ENCODE measurements at regions of chr6 and their contacts with region 1.

Region 1: DNA sequence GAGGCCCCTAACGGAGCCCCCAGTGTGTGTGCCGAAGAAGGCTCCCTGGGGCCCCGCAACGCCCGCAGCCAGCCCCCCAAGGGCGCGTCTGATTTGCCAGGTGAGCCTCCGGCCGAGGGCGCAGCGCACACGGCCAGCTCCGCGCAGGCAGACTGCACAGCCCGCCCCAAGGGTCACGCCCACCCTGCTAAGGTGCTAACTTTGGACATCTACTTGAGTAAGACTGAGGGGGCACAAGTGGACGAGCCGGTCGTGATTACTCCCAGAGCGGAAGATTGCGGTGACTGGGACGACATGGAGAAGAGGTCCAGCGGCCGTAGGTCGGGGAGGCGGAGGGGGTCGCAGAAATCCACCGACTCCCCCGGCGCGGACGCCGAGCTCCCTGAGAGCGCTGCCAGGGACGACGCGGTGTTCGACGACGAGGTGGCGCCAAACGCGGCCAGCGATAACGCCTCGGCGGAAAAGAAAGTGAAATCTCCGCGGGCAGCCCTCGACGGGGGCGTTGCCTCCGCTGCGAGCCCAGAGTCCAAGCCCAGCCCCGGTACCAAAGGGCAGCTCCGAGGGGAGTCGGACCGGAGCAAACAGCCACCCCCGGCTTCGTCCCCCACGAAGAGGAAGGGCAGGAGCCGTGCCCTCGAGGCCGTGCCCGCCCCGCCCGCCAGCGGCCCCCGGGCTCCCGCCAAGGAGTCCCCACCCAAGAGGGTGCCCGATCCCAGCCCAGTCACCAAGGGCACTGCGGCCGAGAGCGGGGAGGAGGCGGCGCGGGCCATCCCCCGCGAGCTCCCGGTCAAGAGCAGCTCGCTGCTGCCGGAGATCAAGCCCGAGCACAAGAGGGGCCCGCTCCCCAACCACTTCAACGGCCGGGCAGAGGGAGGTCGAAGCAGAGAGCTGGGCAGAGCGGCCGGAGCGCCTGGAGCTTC is 117.0 kb downstream of the RTN4IP1 start:
- DNase-seq: peak; percentile 80
- H3K4me3 Mint-ChIP-seq: peak overlapping the region; percentile 87
- H3K27ac Mint-ChIP-seq: peak overlapping the region; percentile 88
- H3K4me1 Mint-ChIP-seq: peaks cover 59% of the 10 kb centered on the region
- H3K27me3 Mint-ChIP-seq: peaks cover 12% of the 10 kb centered on the region

Region 2: GRCh38 chr6:105992315-105992961 is 519.9 kb before region 1 on chr6:
- intact Hi-C with region 1: loop called (anchors 5 kb)
- DNase-seq: peak; percentile 89
- H3K4me3 Mint-ChIP-seq: peak overlapping the region; percentile 94
- H3K27ac Mint-ChIP-seq: peak overlapping the region; percentile 81
- H3K4me1 Mint-ChIP-seq: peaks cover 57% of the 10 kb centered on the region
- H3K27me3 Mint-ChIP-seq: peaks cover 23% of the 10 kb centered on the region

Region 3: GRCh38 chr6:106444777-106445507 is 67.4 kb before region 1 on chr6:
- intact Hi-C with region 1: loop called (anchors 2 kb)
- DNase-seq: peak; percentile 18
- H3K4me3 Mint-ChIP-seq: no peak overlapping the region
- H3K27ac Mint-ChIP-seq: no peak overlapping the region
- H3K4me1 Mint-ChIP-seq: peaks cover 22% of the 10 kb centered on the region
- H3K27me3 Mint-ChIP-seq: peaks cover 37% of the 10 kb centered on the region

Region 4: DNA sequence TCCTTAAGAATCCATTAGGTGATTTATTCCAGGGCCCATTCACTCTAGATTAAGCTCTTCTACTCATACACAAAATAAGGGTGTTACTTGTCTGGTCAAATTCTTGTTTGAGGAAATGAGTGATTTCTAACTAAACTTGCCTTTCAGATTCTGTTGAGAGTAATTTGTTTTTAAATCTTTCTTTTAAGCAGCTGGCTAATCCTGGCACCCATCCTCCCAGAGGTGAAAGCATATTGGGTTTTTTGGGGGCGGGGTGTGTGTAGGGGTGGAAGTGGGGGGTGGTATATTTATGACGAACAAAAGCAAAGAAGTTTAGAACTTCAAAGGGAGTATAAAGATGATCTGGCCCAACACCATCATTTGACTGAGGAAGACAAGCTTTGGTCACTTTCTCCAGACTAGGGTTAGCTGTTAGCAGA is 22.3 kb after region 1 on chr6:
- intact Hi-C with region 1: loop called (anchors 1 kb)
- DNase-seq: no peak
- H3K4me3 Mint-ChIP-seq: peak overlapping the region; percentile 9
- H3K27ac Mint-ChIP-seq: peak overlapping the region; percentile 82
- H3K4me1 Mint-ChIP-seq: peaks cover 70% of the 10 kb centered on the region
- H3K27me3 Mint-ChIP-seq: no peaks in the 10 kb centered on the region

Region 5: DNA sequence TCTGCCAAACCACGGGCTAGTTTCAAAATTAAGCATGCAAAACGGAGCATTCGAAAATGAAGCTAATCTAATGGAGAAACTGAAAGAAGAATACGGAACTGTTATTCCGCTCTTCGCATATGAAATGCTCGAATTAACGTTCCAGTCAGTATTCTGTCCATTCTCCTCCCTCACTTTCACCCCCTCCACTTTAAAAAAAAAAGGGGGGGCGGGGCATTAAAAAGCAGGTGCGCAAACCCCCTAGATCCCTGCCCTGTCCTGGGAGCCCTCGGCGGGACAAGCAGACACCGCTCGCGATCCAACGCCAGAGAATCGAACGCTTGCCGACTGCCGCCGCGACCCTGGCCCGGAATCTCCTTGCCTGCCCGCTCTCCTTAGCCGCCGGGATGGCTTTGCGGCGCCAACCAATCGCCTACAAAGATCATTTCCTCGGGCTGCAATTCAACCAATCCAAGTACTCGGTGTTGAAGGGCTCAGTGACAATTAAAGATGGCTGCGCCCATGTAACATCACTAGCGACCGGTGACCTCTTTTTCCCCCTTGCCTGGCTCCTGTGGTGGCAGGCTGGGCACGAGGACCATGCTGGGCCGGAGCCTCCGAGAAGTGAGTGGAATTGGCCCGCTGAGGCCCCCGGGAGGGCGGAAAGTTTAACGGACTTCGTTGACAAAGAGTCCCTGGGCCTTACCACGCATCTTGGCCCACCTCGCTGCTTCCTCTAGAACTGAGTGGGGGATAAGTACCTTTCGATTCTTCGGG is 117.0 kb after region 1 on chr6 and contains the starts of genes QRSL1 and RTN4IP1:
- intact Hi-C with region 1: loop called (anchors 5 kb)
- DNase-seq: peak; percentile 85
- H3K4me3 Mint-ChIP-seq: peak within 1 kb of the TSS; percentile 91
- H3K27ac Mint-ChIP-seq: peak within 1 kb of the TSS; percentile 97
- H3K4me1 Mint-ChIP-seq: peaks cover 41% of the 10 kb centered on the region
- H3K27me3 Mint-ChIP-seq: no peaks in the 10 kb centered on the region
- total RNA-seq, gene QRSL1: 18.9 and 21.8 TPM in 2 replicates
- total RNA-seq, gene RTN4IP1: 6.4 and 7.9 TPM in 2 replicates

Measured in activated T-helper 2 cell treated with anti-CD3 and anti-CD28 coated beads, Interferon-gamma antibody, Interleukin-2, Interleukin-4, amounts not matched to agents 10 μg/mL and 5 μg/mL and 100 μg/mL, durations not matched to agents 14 hours and 24 hours and 36 hours (primary cell).